ENCODE measurements at regions of chr9 and their contacts with region 1.

Region 1: DNA sequence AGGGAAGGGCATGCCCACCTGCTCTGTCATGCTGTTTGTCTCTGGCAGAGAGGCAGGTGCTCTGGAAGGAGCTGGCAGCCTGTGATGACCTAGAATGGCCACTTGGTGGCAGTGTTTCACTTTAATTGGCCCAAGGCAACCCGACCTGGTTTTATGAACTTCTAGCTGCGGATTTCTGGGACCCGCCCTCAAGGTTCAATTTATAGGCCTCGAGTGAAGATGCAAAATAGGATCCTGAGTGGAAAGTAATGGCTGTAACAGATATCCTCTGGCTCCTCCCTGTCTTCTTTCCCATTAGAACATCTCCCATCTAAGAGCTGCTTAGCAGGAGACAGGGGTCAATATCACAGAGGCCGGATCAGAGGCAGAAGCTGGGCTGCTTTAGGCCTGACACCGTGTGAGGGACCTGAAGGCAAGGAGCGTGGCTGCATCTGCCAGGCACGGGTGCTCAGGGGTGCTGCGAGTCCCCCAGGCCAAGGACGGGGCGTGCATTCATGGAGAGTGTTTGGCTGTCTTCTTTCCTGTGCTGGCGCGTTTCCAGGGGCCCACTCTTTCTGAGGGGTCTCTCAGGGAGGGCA is 56.7 kb upstream of the SLC28A3 start:
- DNase-seq: peak; percentile 49 to 67
- ATAC-seq: peak; percentile 86 to 94
- H3K4me3 ChIP-seq: no peak overlapping the region
- H3K27ac ChIP-seq: no peak overlapping the region
- H3K4me1 ChIP-seq: no peaks in the 10 kb centered on the region
- CTCF ChIP-seq: peak; percentile 86
- EP300 ChIP-seq: no peak
- POLR2A ChIP-seq: no peak
- RAD21 ChIP-seq: peak; percentile 90 to 92

Region 2: DNA sequence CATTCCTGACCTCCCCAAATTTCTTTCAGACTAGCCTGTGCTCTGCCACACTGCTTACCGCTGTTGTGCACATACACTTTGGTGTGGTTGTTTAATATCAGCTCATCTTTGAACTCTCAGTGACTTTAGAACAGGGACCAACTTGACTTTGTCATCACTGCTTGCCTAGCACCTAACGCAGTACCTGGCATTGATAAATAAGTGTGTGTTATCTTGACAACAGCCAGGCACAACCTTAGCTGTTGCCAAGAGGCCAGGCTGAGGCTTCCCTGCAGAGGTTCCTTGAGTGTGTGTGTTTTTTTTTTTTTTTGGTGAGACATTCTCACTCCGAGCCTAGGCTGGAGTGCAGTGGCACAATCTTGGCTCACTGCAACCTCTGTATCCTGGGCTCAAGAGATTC is 15.7 kb before region 1 on chr9:
- CTCF ChIA-PET with region 1: interaction called, 57 read pairs
- POLR2A ChIA-PET with region 1: no interaction called
- DNase-seq: no peak
- ATAC-seq: no peak
- H3K4me3 ChIP-seq: no peak overlapping the region
- H3K27ac ChIP-seq: no peak overlapping the region
- H3K4me1 ChIP-seq: no peaks in the 10 kb centered on the region
- CTCF ChIP-seq: no peak
- EP300 ChIP-seq: no peak
- POLR2A ChIP-seq: no peak
- RAD21 ChIP-seq: no peak

Region 3: DNA sequence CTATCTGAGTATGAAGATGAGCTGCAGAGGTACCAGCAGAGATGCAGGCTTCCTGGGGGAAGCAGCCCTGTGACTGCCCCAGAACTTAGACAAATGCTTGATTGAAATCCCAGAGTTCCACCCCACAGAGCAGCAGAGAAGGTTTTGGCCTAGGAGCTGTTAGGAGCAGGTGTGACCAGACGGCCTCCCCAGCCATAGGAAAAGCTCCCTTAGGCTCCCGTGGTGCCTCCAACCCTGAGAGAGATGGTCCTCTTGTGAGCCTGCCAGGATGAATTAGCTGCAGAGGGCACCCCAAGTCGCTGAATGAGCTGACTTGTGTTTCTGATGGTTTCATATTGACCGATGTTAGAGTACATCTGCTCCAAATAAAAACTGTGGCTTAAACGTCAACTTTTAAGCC is 294.4 kb after region 1 on chr9:
- CTCF ChIA-PET with region 1: no interaction called
- POLR2A ChIA-PET with region 1: no interaction called
- DNase-seq: no peak
- ATAC-seq: no peak
- H3K4me3 ChIP-seq: no peak overlapping the region
- H3K27ac ChIP-seq: no peak overlapping the region
- H3K4me1 ChIP-seq: no peaks in the 10 kb centered on the region
- CTCF ChIP-seq: no peak
- EP300 ChIP-seq: no peak
- POLR2A ChIP-seq: no peak
- RAD21 ChIP-seq: no peak

Region 4: DNA sequence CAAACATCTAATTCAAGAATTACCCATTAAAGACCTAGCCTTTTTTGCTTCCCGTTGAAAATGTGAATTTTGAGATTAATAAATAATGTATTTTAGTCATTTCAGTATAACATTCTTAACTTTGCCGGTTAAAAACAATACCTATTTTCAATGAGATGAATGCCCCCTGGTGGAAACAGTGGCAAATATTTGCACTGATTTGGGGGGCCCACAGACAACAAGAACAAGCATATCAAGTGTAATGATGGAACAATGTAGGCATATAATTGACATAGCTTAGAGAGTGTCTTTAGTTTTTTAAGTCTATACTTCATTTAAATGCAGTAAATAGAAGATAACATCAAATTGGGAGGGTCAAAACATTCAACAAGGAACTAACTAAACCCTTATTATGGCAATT is 384.2 kb after region 1 on chr9:
- CTCF ChIA-PET with region 1: interaction called, 10 read pairs
- POLR2A ChIA-PET with region 1: no interaction called
- DNase-seq: peak in 1 of 2 experiments; percentile 7
- ATAC-seq: peak in 1 of 2 experiments; percentile 28; a peak in 1 of 6 replicates
- H3K4me3 ChIP-seq: no peak overlapping the region
- H3K27ac ChIP-seq: no peak overlapping the region
- H3K4me1 ChIP-seq: no peaks in the 10 kb centered on the region
- CTCF ChIP-seq: peak; percentile 35; the same call in 2 of the 3 replicates
- EP300 ChIP-seq: no peak
- POLR2A ChIP-seq: no peak
- RAD21 ChIP-seq: peak in 1 of 2 experiments; percentile 46; a peak in 2 of 5 replicates

Region 5: DNA sequence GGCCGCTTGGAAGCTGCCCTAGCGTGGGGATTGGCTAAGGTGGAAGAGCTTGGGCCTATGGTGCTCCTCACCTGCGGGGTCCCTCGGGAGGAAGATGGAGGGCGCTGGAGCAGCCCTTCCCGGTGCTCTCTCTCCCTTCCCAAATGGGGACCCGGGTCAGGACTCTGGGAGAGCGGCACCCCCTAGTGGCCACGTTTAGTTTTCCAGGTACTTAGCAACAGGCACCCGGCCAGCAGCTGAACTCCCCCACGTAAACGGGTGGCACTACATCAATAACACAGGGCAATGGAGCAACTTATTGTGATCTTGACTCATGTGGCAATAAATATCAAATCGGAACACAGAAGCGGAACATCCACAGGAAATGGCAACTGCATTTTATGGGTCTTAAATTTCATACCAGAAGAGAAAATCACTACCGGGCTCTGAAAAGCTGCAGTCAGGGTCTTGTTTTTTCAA is 1027.9 kb after region 1 on chr9:
- CTCF ChIA-PET with region 1: interaction called, 35 read pairs
- POLR2A ChIA-PET with region 1: no interaction called
- DNase-seq: peak; percentile 62 to 69
- ATAC-seq: peak; percentile 83 to 92
- H3K4me3 ChIP-seq: no peak overlapping the region
- H3K27ac ChIP-seq: no peak overlapping the region
- H3K4me1 ChIP-seq: no peaks in the 10 kb centered on the region
- CTCF ChIP-seq: peak; percentile 52
- EP300 ChIP-seq: no peak
- POLR2A ChIP-seq: no peak
- RAD21 ChIP-seq: peak; percentile 72 to 82

Region 6: GRCh38 chr9:85610074-85610860 is 1213.0 kb after region 1 on chr9:
- CTCF ChIA-PET with region 1: interaction called, 32 read pairs
- POLR2A ChIA-PET with region 1: no interaction called
- DNase-seq: peak; percentile 73 to 78
- ATAC-seq: peak; percentile 94 to 96
- H3K4me3 ChIP-seq: no peak overlapping the region
- H3K27ac ChIP-seq: 0 out of 6 replicates have a peak overlapping the region, but pooled peaks of 1 of the 2 experiments have one; percentile 34
- H3K4me1 ChIP-seq: no peaks in the 10 kb centered on the region
- CTCF ChIP-seq: peak; percentile 80
- EP300 ChIP-seq: no peak
- POLR2A ChIP-seq: no peak
- RAD21 ChIP-seq: peak; percentile 74 to 83